CD4-positive, alpha-beta T cell (primary cell): ENCODE measurements at regions of chr1 and their contacts with region 1.

Region 1: GRCh38 chr1:236759252-236759859 is 35.7 kb upstream of the MTR start:
- DNase-seq: peak in 4 of 14 experiments; percentile 17 to 74 (median 55)
- ATAC-seq: no peak
- H3K4me3 ChIP-seq: no peak overlapping the region
- H3K4me3 Mint-ChIP-seq: no peak overlapping the region
- H3K27ac ChIP-seq: no peak overlapping the region
- H3K27ac Mint-ChIP-seq: no peak overlapping the region
- H3K4me1 ChIP-seq: peaks cover 3% of the 10 kb centered on the region
- H3K4me1 Mint-ChIP-seq: no peaks in the 10 kb centered on the region
- H3K27me3 ChIP-seq: no peaks in the 10 kb centered on the region
- H3K27me3 Mint-ChIP-seq: no peaks in the 10 kb centered on the region
- CTCF ChIP-seq: peak; percentile 87

Region 2: DNA sequence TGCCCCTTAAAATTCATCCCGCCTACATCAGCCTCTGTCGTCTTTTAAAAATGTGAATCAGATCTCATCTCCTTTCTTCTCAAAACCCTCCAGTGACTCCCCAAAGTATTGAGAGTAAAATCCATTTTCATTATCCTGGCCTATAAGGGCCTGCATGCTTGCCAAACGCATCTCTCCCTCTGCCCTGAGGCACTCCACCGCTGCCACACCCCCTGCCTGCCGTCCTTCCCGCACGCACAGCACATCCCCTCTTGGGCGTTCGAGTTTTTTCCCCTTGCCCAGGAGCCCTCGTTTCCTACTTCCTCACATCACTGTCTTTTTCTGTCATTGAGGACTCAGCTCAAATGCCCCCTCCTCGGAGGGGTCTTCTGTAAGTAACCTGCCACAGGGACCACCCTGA is 17.6 kb before region 1 on chr1:
- CTCF ChIA-PET with region 1: no interaction called
- POLR2A ChIA-PET with region 1: no interaction called
- intact Hi-C with region 1: no loop called
- DNase-seq: no peak
- ATAC-seq: no peak
- H3K4me3 ChIP-seq: no peak overlapping the region
- H3K4me3 Mint-ChIP-seq: no peak overlapping the region
- H3K27ac ChIP-seq: no peak overlapping the region
- H3K27ac Mint-ChIP-seq: no peak overlapping the region
- H3K4me1 ChIP-seq: no peaks in the 10 kb centered on the region
- H3K4me1 Mint-ChIP-seq: no peaks in the 10 kb centered on the region
- H3K27me3 ChIP-seq: no peaks in the 10 kb centered on the region
- H3K27me3 Mint-ChIP-seq: peaks cover 14% of the 10 kb centered on the region
- CTCF ChIP-seq: no peak

Region 3: GRCh38 chr1:236868625-236869467 is 109.5 kb after region 1 on chr1:
- CTCF ChIA-PET with region 1: interaction called, 6 read pairs
- POLR2A ChIA-PET with region 1: no interaction called
- intact Hi-C with region 1: loop called (anchors 1 kb)
- DNase-seq: peak in 13 of 14 experiments; percentile 7 to 76 (median 25)
- ATAC-seq: peak; percentile 51
- H3K4me3 ChIP-seq: no peak overlapping the region
- H3K4me3 Mint-ChIP-seq: no peak overlapping the region
- H3K27ac ChIP-seq: no peak overlapping the region
- H3K27ac Mint-ChIP-seq: no peak overlapping the region
- H3K4me1 ChIP-seq: no peaks in the 10 kb centered on the region
- H3K4me1 Mint-ChIP-seq: no peaks in the 10 kb centered on the region
- H3K27me3 ChIP-seq: no peaks in the 10 kb centered on the region
- H3K27me3 Mint-ChIP-seq: no peaks in the 10 kb centered on the region
- CTCF ChIP-seq: peak; percentile 96

Region 4: DNA sequence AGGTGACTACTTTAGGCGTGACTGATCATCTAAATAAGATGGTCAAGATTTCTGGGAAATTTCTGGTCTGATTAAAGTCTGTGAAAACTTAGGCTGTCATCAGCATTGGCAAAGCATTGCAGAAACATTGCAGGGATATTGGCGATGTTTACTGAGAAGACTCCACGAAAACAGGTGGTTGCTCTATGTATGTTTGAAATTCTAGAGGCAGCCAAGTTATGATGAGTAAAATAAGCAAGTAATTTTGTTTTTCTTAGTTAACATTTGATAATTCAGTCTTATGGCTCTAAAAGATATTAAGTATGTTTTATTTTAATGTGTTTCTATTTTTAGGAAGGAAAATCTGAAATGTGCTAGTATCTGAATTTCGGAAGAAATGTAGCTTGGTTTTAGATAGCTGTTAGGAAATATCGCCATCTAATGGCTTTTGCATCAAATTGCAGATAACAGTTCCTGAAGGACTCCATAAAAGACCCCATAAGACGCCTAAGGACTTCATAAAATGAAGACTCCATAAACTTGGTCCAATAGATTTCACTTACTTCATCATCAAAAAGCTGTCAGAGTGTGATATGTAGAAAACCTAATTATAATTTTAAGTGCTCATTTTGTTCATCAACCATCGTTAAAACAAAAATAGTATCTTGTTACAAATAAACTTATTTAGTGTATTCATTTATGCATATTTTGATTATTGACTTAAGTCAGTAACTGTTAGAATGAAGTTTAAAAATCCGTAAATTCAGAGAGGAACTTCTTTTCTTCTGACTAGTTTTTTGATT is 627.2 kb after region 1 on chr1:
- CTCF ChIA-PET with region 1: no interaction called
- POLR2A ChIA-PET with region 1: no interaction called
- intact Hi-C with region 1: loop called in 1 of 2 experiments (anchors 5 kb)
- DNase-seq: peak in 3 of 14 experiments; percentile 4 to 8 (median 6)
- ATAC-seq: no peak
- H3K4me3 ChIP-seq: no peak overlapping the region
- H3K4me3 Mint-ChIP-seq: no peak overlapping the region
- H3K27ac ChIP-seq: no peak overlapping the region
- H3K27ac Mint-ChIP-seq: no peak overlapping the region
- H3K4me1 ChIP-seq: no peaks in the 10 kb centered on the region
- H3K4me1 Mint-ChIP-seq: no peaks in the 10 kb centered on the region
- H3K27me3 ChIP-seq: no peaks in the 10 kb centered on the region
- H3K27me3 Mint-ChIP-seq: no peaks in the 10 kb centered on the region
- CTCF ChIP-seq: peak; percentile 35

Region 5: GRCh38 chr1:237562242-237562823 is 803.0 kb after region 1 on chr1:
- CTCF ChIA-PET with region 1: interaction called, 6 read pairs
- POLR2A ChIA-PET with region 1: no interaction called
- intact Hi-C with region 1: loop called in 1 of 2 experiments (anchors 10 kb)
- DNase-seq: peak in 3 of 14 experiments; percentile 57 to 64 (median 59)
- ATAC-seq: no peak
- H3K4me3 ChIP-seq: no peak overlapping the region
- H3K4me3 Mint-ChIP-seq: no peak overlapping the region
- H3K27ac ChIP-seq: no peak overlapping the region
- H3K27ac Mint-ChIP-seq: no peak overlapping the region
- H3K4me1 ChIP-seq: no peaks in the 10 kb centered on the region
- H3K4me1 Mint-ChIP-seq: no peaks in the 10 kb centered on the region
- H3K27me3 ChIP-seq: no peaks in the 10 kb centered on the region
- H3K27me3 Mint-ChIP-seq: peaks cover 7% of the 10 kb centered on the region
- CTCF ChIP-seq: peak; percentile 79